ENCODE measurements at regions of chr20 and their contacts with region 1.

Region 1: GRCh38 chr20:49186535-49187329 is 1.4 kb downstream of the STAU1 start:
- DNase-seq: peak; percentile 66 to 72
- H3K4me3 ChIP-seq: peak overlapping the region; percentile 95
- H3K27ac ChIP-seq: peak overlapping the region; percentile 91 to 93
- H3K4me1 ChIP-seq: peaks cover 0 to 35% (median 10%) of the 10 kb centered on the region in 4 donors
- H3K27me3 ChIP-seq: no peaks in the 10 kb centered on the region
- CTCF ChIP-seq: no peak

Region 2: GRCh38 chr20:49541733-49542513 is 355.2 kb after region 1 on chr20:
- intact Hi-C with region 1: no loop called
- DNase-seq: peak; percentile 78 to 87
- H3K4me3 ChIP-seq: no peak overlapping the region
- H3K27ac ChIP-seq: peak overlapping the region; percentile 68 to 99
- H3K4me1 ChIP-seq: peaks cover 0 to 44% (median 11%) of the 10 kb centered on the region in 4 donors
- H3K27me3 ChIP-seq: no peaks in the 10 kb centered on the region
- CTCF ChIP-seq: peak; percentile 90 to 99

Region 3: GRCh38 chr20:50509935-50510705 is 1323.4 kb after region 1 on chr20 and contains the start of gene PTPN1:
- intact Hi-C with region 1: loop called (anchors 5 kb)
- DNase-seq: peak; percentile 98 to 99
- H3K4me3 ChIP-seq: peak within 1 kb of the TSS; percentile 86 to 91
- H3K27ac ChIP-seq: peak within 1 kb of the TSS; percentile 88 to 90
- H3K4me1 ChIP-seq: peaks cover 0 to 48% (median 32%) of the 10 kb centered on the region in 4 donors
- H3K27me3 ChIP-seq: no peaks in the 10 kb centered on the region
- CTCF ChIP-seq: peak; percentile 26 to 34